ENCODE measurements at regions of chr6 and their contacts with region 1.

Region 1: GRCh38 chr6:85460921-85461797 is 11.3 kb downstream of the NT5E start:
- DNase-seq: peak; percentile 82
- ATAC-seq: peak; percentile 55
- H3K4me3 Mint-ChIP-seq: peak overlapping the region; percentile 51
- H3K27ac Mint-ChIP-seq: peak overlapping the region; percentile 97
- H3K4me1 Mint-ChIP-seq: peaks cover 97% of the 10 kb centered on the region
- H3K27me3 Mint-ChIP-seq: no peaks in the 10 kb centered on the region
- CTCF ChIP-seq: no peak

Region 2: GRCh38 chr6:85354761-85355618 is 106.2 kb before region 1 on chr6:
- CTCF ChIA-PET with region 1: interaction called, 14 read pairs
- POLR2A ChIA-PET with region 1: interaction called, 3 read pairs
- intact Hi-C with region 1: loop called (anchors 5 kb)
- DNase-seq: peak; percentile 79
- ATAC-seq: peak; percentile 89
- H3K4me3 Mint-ChIP-seq: no peak overlapping the region
- H3K27ac Mint-ChIP-seq: no peak overlapping the region
- H3K4me1 Mint-ChIP-seq: no peaks in the 10 kb centered on the region
- H3K27me3 Mint-ChIP-seq: peaks cover 2% of the 10 kb centered on the region
- CTCF ChIP-seq: peak; percentile 91

Region 3: DNA sequence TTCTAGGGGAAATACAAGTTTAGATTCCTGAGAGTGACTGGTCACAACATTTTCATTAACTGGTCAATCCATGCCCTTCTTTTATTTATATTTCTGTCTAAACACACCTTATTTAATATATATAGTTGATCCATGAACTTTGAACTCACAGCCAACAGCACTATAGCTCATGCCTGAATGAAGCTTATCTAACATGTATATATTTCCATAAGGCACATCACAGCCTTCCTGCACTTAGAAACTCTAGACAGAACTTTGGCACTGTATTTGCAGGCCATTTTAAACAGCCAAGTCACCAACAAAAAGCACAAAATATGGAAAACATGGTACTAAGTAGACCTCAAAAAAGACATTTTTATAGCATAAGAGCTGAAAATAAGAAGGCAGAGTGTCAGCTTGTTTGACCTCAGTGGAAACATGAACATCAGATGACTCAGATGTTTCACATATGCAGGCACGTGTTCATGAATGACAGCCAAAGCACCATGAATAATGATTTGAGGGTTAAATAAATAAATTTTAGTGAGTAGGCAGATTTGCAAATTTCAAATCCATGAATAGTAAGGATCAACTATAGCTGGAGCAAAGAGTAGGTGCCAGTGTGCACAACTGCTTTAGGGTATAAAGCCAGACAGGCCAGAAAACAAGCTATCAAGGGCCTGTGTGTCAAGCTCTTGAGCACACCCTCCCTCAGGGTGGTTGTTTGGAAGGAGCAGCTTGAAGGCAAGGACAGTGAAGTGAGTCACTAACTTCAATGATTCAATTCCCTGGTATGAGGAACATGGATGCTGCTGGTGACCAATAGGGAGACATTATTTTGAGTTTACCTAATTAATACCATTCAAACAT is 100.1 kb before region 1 on chr6:
- CTCF ChIA-PET with region 1: interaction called, 3 read pairs
- POLR2A ChIA-PET with region 1: interaction called, 3 read pairs
- intact Hi-C with region 1: loop called (anchors 5 kb)
- DNase-seq: peak; percentile 8
- ATAC-seq: peak; percentile 63
- H3K4me3 Mint-ChIP-seq: no peak overlapping the region
- H3K27ac Mint-ChIP-seq: no peak overlapping the region
- H3K4me1 Mint-ChIP-seq: peaks cover 14% of the 10 kb centered on the region
- H3K27me3 Mint-ChIP-seq: no peaks in the 10 kb centered on the region
- CTCF ChIP-seq: no peak

Region 4: DNA sequence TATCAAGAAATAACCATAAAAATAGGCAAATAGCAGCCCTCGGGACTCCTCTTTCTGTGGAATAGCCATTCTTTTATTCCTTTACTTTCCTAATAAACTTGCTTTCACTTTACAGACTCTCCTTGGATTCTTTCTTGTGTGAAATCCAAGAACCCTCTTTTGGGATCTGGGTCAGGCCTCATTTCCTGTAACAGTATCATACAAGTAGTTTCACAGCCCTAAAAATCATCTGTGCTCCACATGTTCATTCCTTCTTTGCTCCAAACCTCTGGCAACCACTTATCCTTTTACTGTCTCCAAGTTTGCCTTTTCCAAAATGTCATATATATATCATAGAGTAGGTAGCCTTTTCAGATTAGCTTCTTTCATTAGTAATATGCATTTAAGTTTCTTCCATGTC is 24.7 kb before region 1 on chr6:
- CTCF ChIA-PET with region 1: no interaction called
- POLR2A ChIA-PET with region 1: no interaction called
- intact Hi-C with region 1: no loop called
- DNase-seq: no peak
- ATAC-seq: no peak
- H3K4me3 Mint-ChIP-seq: no peak overlapping the region
- H3K27ac Mint-ChIP-seq: no peak overlapping the region
- H3K4me1 Mint-ChIP-seq: peaks cover 7% of the 10 kb centered on the region
- H3K27me3 Mint-ChIP-seq: no peaks in the 10 kb centered on the region
- CTCF ChIP-seq: no peak